ENCODE measurements at regions of chr2 and their contacts with region 1.

Region 1: GRCh38 chr2:38602732-38603401 is at the start of gene HNRNPLL:
- DNase-seq: peak; percentile 92 to 94 (median 92)
- H3K4me3 ChIP-seq: peak within 1 kb of the TSS; percentile 64 to 71
- H3K4me3 Mint-ChIP-seq: peak within 1 kb of the TSS; percentile 96 to 98 (median 98)
- H3K27ac ChIP-seq: peak within 1 kb of the TSS; percentile 89
- H3K27ac Mint-ChIP-seq: peak within 1 kb of the TSS; percentile 81 to 99 (median 97)
- H3K4me1 ChIP-seq: peaks cover 46% of the 10 kb centered on the region
- H3K4me1 Mint-ChIP-seq: peaks cover 28 to 51% (median 40%) of the 10 kb centered on the region in 4 donors
- H3K27me3 ChIP-seq: no peaks in the 10 kb centered on the region
- H3K27me3 Mint-ChIP-seq: peaks cover 0 to 2% of the 10 kb centered on the region in 2 donors
- total RNA-seq, gene HNRNPLL: 103 to 105 TPM

Region 2: GRCh38 chr2:38178547-38179419 is 424.1 kb before region 1 on chr2:
- CTCF ChIA-PET with region 1: no interaction called
- POLR2A ChIA-PET with region 1: no interaction called
- intact Hi-C with region 1: no loop called
- DNase-seq: no peak
- H3K4me3 ChIP-seq: no peak overlapping the region
- H3K4me3 Mint-ChIP-seq: no peak overlapping the region
- H3K27ac ChIP-seq: no peak overlapping the region
- H3K27ac Mint-ChIP-seq: no peak overlapping the region
- H3K4me1 ChIP-seq: no peaks in the 10 kb centered on the region
- H3K4me1 Mint-ChIP-seq: no peaks in the 10 kb centered on the region
- H3K27me3 ChIP-seq: no peaks in the 10 kb centered on the region
- H3K27me3 Mint-ChIP-seq: peaks cover 14 to 23% of the 10 kb centered on the region in 2 donors

Region 3: DNA sequence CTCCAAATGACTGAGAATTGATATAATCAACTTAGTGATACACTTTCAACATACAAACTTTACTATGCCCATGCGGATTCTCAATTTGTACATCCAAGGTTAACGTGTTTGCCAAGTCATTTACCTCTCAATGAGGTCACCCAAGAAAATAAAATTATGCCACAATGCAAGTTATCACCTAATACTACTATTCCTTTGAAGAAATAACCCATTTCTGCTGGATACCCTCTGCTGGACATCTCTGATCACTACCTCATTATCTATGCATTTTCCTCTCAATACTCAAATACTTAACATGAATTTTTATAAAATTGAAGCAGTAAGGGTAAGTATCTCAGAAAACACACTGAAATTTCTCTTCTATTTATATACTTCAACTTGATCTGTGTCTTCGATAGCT is 12.8 kb before region 1 on chr2:
- CTCF ChIA-PET with region 1: interaction called, 268 read pairs
- POLR2A ChIA-PET with region 1: interaction called, 332 read pairs
- intact Hi-C with region 1: loop called (anchors 1 kb)
- DNase-seq: peak in 1 of 5 donors; percentile 15
- H3K4me3 ChIP-seq: peak overlapping the region in 1 of 2 donors; percentile 15
- H3K4me3 Mint-ChIP-seq: peak overlapping the region; percentile 55 to 81 (median 76)
- H3K27ac ChIP-seq: peak overlapping the region; percentile 54
- H3K27ac Mint-ChIP-seq: peak overlapping the region; percentile 76 to 96 (median 83)
- H3K4me1 ChIP-seq: peaks cover 99% of the 10 kb centered on the region
- H3K4me1 Mint-ChIP-seq: peaks cover 46 to 83% (median 66%) of the 10 kb centered on the region in 4 donors
- H3K27me3 ChIP-seq: no peaks in the 10 kb centered on the region
- H3K27me3 Mint-ChIP-seq: no peaks in the 10 kb centered on the region

Region 4: GRCh38 chr2:38653715-38654527 is 51.1 kb after region 1 on chr2:
- CTCF ChIA-PET with region 1: interaction called, 24 read pairs
- POLR2A ChIA-PET with region 1: interaction called, 51 read pairs
- intact Hi-C with region 1: no loop called
- DNase-seq: peak; percentile 66 to 82 (median 70)
- H3K4me3 ChIP-seq: peak overlapping the region in 1 of 2 donors; percentile 18
- H3K4me3 Mint-ChIP-seq: peak overlapping the region in 7 of 8 donors; percentile 61 to 87 (median 80)
- H3K27ac ChIP-seq: peak overlapping the region; percentile 51
- H3K27ac Mint-ChIP-seq: peak overlapping the region; percentile 87 to 97 (median 97)
- H3K4me1 ChIP-seq: peaks cover 56% of the 10 kb centered on the region
- H3K4me1 Mint-ChIP-seq: peaks cover 32 to 71% (median 50%) of the 10 kb centered on the region in 4 donors
- H3K27me3 ChIP-seq: no peaks in the 10 kb centered on the region
- H3K27me3 Mint-ChIP-seq: no peaks in the 10 kb centered on the region

Region 5: DNA sequence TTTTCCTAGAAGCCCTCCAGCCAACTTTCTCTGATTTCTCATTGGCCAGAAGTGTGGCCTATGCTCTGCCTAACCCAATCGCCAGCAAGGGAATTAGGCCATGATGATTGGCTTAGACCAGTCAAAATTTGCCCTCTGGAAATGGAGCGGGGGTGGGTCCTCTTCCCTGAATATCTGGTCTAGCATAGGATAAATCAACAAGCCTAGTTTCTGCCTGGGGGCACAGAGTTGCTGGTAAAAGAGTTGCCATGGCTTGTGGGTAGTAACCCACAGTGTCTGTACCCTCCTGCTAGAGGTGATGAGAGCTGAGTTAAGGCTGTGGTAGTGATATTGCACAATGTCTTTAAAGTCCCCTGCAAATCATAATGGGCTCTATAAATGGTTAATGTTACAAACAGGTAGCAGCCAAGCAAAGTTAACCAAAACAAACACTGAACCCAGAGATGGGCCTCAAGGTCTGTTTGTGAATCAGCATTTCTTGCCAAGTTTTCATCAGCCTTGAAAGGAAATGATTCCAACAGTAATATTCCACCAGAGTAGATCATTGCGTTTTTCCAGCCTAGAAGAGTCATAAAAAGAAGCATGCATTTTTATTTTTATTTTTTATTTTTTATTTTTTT is 82.4 kb after region 1 on chr2:
- CTCF ChIA-PET with region 1: interaction called, 148 read pairs
- POLR2A ChIA-PET with region 1: interaction called, 143 read pairs
- intact Hi-C with region 1: loop called (anchors 1 kb)
- DNase-seq: no peak
- H3K4me3 ChIP-seq: no peak overlapping the region
- H3K4me3 Mint-ChIP-seq: peak overlapping the region in 3 of 8 donors; percentile 24 to 62 (median 53)
- H3K27ac ChIP-seq: no peak overlapping the region
- H3K27ac Mint-ChIP-seq: peak overlapping the region in 6 of 7 donors; percentile 10 to 98 (median 83)
- H3K4me1 ChIP-seq: peaks cover 61% of the 10 kb centered on the region
- H3K4me1 Mint-ChIP-seq: peaks cover 38 to 76% (median 54%) of the 10 kb centered on the region in 4 donors
- H3K27me3 ChIP-seq: no peaks in the 10 kb centered on the region
- H3K27me3 Mint-ChIP-seq: no peaks in the 10 kb centered on the region

Region 6: GRCh38 chr2:38709567-38710194 is 106.8 kb after region 1 on chr2:
- CTCF ChIA-PET with region 1: interaction called, 9 read pairs
- POLR2A ChIA-PET with region 1: interaction called, 46 read pairs
- intact Hi-C with region 1: loop called (anchors 1 kb)
- DNase-seq: peak; percentile 81 to 87 (median 84)
- H3K4me3 ChIP-seq: peak overlapping the region in 1 of 2 donors; percentile 13
- H3K4me3 Mint-ChIP-seq: peak overlapping the region; percentile 33 to 90 (median 80)
- H3K27ac ChIP-seq: peak overlapping the region; percentile 46
- H3K27ac Mint-ChIP-seq: peak overlapping the region; percentile 92 to 98 (median 96)
- H3K4me1 ChIP-seq: peaks cover 84% of the 10 kb centered on the region
- H3K4me1 Mint-ChIP-seq: peaks cover 58 to 88% (median 74%) of the 10 kb centered on the region in 4 donors
- H3K27me3 ChIP-seq: no peaks in the 10 kb centered on the region
- H3K27me3 Mint-ChIP-seq: no peaks in the 10 kb centered on the region

Region 7: DNA sequence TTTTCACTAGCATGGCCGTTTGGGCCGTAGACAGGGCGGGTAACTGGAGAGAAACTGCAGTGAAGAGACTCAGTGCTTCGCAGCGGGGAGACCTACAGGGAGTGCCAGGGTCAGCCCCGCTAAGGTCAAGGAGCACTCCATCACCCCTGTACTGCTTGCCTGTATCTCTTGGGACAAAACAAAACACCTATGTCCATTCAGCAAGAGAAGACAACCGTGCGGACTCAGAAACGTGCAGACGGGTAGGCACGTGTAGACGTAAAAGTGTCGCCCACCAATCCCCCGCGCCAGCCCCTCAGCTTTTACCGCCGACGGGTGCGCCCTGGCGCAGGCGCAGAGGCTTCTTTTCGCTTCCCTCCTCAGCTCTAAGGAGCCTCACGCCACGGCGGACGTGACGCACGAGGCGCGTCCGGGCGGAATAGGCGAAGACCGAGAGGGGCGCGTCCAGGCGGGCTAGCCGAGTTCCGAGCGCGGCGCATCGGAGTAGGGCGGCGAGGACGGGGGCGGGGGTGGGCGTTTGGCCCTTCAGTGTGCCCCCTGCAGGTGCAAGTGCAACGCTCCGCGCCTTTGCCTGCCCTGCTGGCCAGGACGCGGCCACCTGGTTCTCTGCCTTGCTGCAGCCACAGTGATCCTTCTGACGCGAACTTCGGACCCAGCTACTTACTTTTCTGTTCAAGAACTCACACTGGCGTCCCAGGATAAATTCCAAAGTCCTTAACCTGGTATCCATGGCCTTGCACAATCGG is 521.3 kb after region 1 on chr2:
- CTCF ChIA-PET with region 1: no interaction called
- POLR2A ChIA-PET with region 1: interaction called, 3 read pairs
- intact Hi-C with region 1: loop called (anchors 10 kb)
- DNase-seq: peak; percentile 92 to 97 (median 94)
- H3K4me3 ChIP-seq: peak overlapping the region; percentile 82 to 99
- H3K4me3 Mint-ChIP-seq: peak overlapping the region; percentile 88 to 96 (median 94)
- H3K27ac ChIP-seq: peak overlapping the region; percentile 92
- H3K27ac Mint-ChIP-seq: peak overlapping the region; percentile 91 to 96 (median 94)
- H3K4me1 ChIP-seq: peaks cover 59% of the 10 kb centered on the region
- H3K4me1 Mint-ChIP-seq: peaks cover 29 to 75% (median 53%) of the 10 kb centered on the region in 4 donors
- H3K27me3 ChIP-seq: no peaks in the 10 kb centered on the region
- H3K27me3 Mint-ChIP-seq: no peaks in the 10 kb centered on the region

Measured in CD4-positive, alpha-beta memory T cell (primary cell).